Activated B cell treated with CpG ODN at 0.5 μM for 24 hours (primary cell): ENCODE measurements at regions of chr2 and their contacts with region 1.

Region 1: GRCh38 chr2:180125245-180125962 is 118.3 kb upstream of the CWC22 start:
- DNase-seq: no peak
- ATAC-seq: peak; percentile 99
- H3K4me3 Mint-ChIP-seq: no peak overlapping the region
- H3K27ac Mint-ChIP-seq: no peak overlapping the region
- H3K4me1 Mint-ChIP-seq: no peaks in the 10 kb centered on the region
- H3K27me3 Mint-ChIP-seq: peaks cover 3% of the 10 kb centered on the region
- CTCF ChIP-seq: no peak

Region 2: GRCh38 chr2:178700922-178701342 is 1424.5 kb before region 1 on chr2:
- CTCF ChIA-PET with region 1: no interaction called
- POLR2A ChIA-PET with region 1: no interaction called
- intact Hi-C with region 1: no loop called
- DNase-seq: no peak
- ATAC-seq: no peak
- H3K4me3 Mint-ChIP-seq: no peak overlapping the region
- H3K27ac Mint-ChIP-seq: no peak overlapping the region
- H3K4me1 Mint-ChIP-seq: no peaks in the 10 kb centered on the region
- H3K27me3 Mint-ChIP-seq: no peaks in the 10 kb centered on the region
- CTCF ChIP-seq: peak; percentile 93

Region 3: DNA sequence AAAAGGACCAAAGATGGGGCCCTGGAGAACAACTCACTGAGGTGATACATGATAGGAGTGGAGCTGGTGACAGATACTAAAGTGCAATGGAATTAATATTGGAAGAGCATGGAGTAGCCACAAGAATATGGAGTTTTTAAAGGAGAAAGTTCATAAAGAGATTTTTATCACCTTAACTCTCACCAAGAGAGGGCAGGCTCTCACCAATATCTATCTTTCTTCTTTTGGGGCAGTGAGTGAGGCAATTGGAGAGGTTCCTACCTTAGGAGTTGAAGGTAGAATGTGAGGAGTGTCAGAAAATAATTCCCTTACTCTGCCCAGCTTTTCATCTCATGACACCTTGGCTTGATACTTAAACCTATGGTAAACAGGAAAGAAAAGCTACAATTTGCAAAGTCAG is 115.4 kb after region 1 on chr2:
- CTCF ChIA-PET with region 1: interaction called, 3 read pairs
- POLR2A ChIA-PET with region 1: no interaction called
- intact Hi-C with region 1: loop called (anchors 5 kb)
- DNase-seq: no peak
- ATAC-seq: no peak
- H3K4me3 Mint-ChIP-seq: no peak overlapping the region
- H3K27ac Mint-ChIP-seq: no peak overlapping the region
- H3K4me1 Mint-ChIP-seq: no peaks in the 10 kb centered on the region
- H3K27me3 Mint-ChIP-seq: no peaks in the 10 kb centered on the region
- CTCF ChIP-seq: no peak

Region 4: DNA sequence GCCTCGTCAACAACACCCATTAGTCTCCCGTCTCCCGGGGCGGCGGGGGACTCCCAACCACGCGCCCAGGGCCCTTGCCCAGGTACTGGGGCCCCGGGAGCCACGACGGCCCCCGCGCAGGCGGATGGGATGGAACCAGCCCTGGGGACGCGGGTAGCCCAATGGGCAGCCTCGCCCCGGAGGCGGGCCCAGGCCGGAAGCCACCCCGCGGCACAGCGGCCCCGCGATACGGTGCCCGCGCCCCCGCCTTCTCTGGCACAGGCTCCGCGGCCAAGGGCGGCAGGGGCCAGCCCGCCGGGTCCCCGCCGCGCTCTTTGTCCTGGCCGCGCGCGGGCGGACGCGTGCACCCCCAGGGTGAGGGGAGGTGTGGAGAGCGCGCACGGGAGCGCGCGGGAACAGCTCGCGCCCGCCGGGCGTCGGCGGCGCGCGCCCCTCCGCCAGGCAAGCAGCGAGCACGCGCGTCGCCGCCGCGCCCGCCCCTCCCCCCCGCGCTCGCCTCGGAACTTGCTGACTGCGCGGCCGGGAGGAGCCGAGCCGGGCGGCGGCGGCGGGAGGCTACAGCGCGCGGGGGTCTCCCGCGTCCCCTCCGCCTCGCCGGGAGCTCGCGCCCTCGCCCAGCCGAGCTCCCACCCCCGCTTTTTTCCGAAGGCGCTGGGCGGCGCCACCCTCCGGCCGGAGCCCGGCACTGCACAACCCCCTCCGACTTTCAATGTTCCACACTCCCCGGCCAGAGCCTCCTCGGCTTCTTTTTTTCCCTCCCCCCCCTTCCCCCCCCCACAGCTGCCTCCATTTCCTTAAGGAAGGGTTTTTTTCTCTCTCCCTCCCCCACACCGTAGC is 854.9 kb after region 1 on chr2 and contains the start of gene UBE2E3:
- CTCF ChIA-PET with region 1: interaction called, 14 read pairs
- POLR2A ChIA-PET with region 1: no interaction called
- intact Hi-C with region 1: loop called (anchors 1 kb)
- DNase-seq: peak; percentile 79
- ATAC-seq: peak; percentile 80
- H3K4me3 Mint-ChIP-seq: peak within 1 kb of the TSS; percentile 93
- H3K27ac Mint-ChIP-seq: peak within 1 kb of the TSS; percentile 95
- H3K4me1 Mint-ChIP-seq: peaks cover 37% of the 10 kb centered on the region
- H3K27me3 Mint-ChIP-seq: no peaks in the 10 kb centered on the region
- CTCF ChIP-seq: no peak
- total RNA-seq, gene UBE2E3: 33.1 and 33.6 TPM in 2 replicates

Region 5: DNA sequence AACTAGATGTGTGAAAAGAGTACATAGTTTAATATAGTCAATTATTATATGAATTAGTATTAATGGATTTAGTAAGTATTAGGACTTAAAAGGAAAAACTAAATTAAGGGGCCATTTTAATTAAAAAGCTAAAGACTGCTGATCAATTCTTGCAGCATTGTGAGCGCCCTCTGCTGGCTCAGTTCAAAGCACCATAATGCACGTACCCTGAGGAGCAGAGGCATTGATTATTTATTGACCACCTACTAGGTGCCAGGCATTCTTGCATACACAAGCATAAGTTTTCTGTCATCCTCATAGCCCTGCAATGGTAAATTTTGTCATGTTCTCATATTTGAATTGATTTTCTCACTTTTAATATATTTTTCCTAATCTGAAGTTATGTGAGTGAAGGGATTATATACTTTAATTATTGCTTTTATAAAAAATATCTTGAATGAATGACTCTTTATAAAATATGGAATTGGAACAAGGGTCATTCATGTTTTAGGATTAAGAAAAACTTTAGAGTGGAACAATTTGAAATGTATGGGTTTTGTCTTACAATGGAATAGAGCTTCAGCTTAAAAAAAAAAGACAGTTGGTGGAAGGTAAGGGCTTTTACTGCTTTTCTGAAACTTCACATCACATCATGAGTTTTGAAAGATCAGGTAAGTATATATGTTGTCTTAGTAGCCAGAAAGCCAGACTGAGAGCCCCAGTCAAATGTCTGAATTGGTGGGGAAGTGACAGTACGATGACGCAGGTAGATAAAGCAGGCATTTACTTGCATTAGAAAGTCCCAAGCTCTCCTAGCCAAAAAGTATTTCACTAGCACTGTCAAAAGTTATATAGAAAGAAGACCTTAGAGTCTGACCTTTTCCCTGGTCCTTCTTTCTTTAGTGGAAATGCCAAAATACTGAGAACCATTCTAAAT is 1341.5 kb after region 1 on chr2:
- CTCF ChIA-PET with region 1: interaction called, 3 read pairs
- POLR2A ChIA-PET with region 1: no interaction called
- intact Hi-C with region 1: loop called (anchors 1 kb)
- DNase-seq: peak; percentile 53
- ATAC-seq: peak; percentile 45
- H3K4me3 Mint-ChIP-seq: no peak overlapping the region
- H3K27ac Mint-ChIP-seq: peak overlapping the region; percentile 26
- H3K4me1 Mint-ChIP-seq: peaks cover 88% of the 10 kb centered on the region
- H3K27me3 Mint-ChIP-seq: no peaks in the 10 kb centered on the region
- CTCF ChIP-seq: peak; percentile 82

Region 6: DNA sequence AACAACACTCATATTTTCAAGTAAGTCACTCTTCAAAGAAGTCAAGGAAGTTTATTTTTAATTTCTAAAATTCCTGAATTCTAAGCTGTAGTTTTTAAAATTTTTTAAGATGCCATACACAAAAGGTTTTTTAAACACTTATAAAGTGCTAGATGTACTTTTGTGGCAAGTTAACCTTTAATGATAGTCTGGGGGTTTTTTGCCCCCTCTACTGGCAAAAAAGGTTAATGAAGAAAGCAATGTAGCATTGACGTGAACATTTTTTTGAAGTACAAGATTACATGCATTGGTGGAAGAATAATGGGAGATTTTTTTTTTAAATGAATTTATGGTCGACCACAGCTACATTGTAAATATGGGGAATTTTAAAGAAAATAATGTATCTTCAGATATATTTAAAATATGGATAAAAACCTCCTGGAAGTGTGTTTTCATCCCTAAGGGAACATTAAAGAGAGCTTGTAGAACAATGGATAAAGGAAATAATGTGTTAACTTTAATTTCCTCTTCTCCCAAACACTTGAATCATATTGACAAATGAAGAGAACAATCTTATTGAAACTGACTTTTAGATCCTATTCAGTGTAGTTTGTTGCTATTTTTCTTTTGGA is 1778.7 kb after region 1 on chr2:
- CTCF ChIA-PET with region 1: interaction called, 4 read pairs
- POLR2A ChIA-PET with region 1: no interaction called
- intact Hi-C with region 1: loop called (anchors 1 kb)
- DNase-seq: no peak
- ATAC-seq: no peak
- H3K4me3 Mint-ChIP-seq: no peak overlapping the region
- H3K27ac Mint-ChIP-seq: no peak overlapping the region
- H3K4me1 Mint-ChIP-seq: peaks cover 6% of the 10 kb centered on the region
- H3K27me3 Mint-ChIP-seq: no peaks in the 10 kb centered on the region
- CTCF ChIP-seq: peak; percentile 29